ENCODE measurements at regions of chr3 and their contacts with region 1.

Region 1: GRCh38 chr3:99808151-99808794 is 9.4 kb upstream of the CMSS1 start:
- H3K4me3 Mint-ChIP-seq: no peak overlapping the region
- H3K27ac Mint-ChIP-seq: no peak overlapping the region
- H3K4me1 Mint-ChIP-seq: no peaks in the 10 kb centered on the region
- H3K27me3 Mint-ChIP-seq: no peaks in the 10 kb centered on the region

Region 2: DNA sequence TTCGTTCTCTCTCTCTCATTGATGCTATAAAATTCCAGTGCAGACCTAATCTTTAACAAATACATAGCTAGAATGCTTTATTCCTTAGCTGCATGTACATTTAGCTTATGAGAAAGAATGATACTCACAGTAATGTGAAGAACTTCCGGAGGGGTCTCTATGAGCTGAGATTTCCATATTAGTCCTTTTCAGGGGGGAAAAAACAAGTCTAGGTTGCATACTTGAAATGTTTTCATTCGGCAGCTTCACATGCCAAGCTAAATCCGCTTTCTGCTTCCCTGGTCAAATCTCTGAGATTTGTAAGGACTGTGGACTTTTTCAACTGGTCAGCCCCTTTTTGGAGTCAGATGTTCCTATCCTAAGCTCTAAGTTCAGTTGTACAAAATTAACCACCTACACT is 281.4 kb before region 1 on chr3:
- intact Hi-C with region 1: loop called (anchors 10 kb)
- H3K4me3 Mint-ChIP-seq: no peak overlapping the region
- H3K27ac Mint-ChIP-seq: no peak overlapping the region
- H3K4me1 Mint-ChIP-seq: peaks cover 9% of the 10 kb centered on the region
- H3K27me3 Mint-ChIP-seq: no peaks in the 10 kb centered on the region

Measured in dendritic cell treated with granulocyte-macrophage colony-stimulating factor and Interleukin-4, amounts not matched to agents 40 ng/mL and 50 ng/mL, for 4 days (primary cell).